MCF 10A (cell line): ENCODE measurements at regions of chr12 and their contacts with region 1.

Region 1: DNA sequence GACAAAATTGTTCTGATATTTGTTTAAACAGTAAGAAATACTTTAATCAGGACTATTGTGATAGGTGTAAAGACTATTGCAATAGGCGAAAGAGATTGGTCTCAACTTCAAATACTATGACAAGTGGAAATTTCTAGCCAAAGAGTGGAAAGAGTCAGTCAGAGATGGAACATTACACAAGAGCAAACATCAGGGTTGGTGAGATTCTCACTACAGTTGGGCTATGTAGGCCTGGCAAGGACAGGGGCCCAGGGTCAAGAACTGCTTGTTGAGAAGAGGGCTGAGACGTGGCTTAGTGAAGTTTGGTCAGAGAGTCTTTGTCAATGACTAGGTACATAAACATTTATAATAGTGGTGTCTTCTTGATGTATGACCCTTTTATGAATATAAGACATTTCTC is 19.4 kb downstream of the CAND1 start:
- DNase-seq: no peak
- H3K4me3 Mint-ChIP-seq: no peak overlapping the region
- H3K27ac Mint-ChIP-seq: no peak overlapping the region
- H3K4me1 Mint-ChIP-seq: no peaks in the 10 kb centered on the region
- H3K27me3 Mint-ChIP-seq: no peaks in the 10 kb centered on the region
- CTCF ChIP-seq: no peak

Region 2: DNA sequence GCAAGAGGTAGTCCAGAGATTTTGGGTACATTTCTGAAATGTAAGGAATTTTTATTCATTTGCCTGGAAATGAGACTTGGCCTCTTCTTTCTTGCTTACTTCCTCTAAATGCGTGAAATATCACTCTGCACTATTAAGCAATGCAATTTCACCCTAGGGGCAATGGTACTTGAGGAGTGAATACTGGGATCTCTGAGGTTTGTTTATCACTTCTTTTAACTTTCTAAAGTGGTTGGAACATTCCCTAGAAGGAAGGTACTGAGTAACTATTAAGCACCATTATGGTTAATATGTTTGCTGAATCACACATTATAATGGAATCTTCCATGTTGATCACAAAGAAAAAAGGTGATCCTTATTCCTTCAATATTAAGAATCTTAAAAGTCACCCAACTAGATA is 140.3 kb before region 1 on chr12:
- CTCF ChIA-PET with region 1: no interaction called
- POLR2A ChIA-PET with region 1: no interaction called
- intact Hi-C with region 1: no loop called
- DNase-seq: peak; percentile 12
- H3K4me3 Mint-ChIP-seq: no peak overlapping the region
- H3K27ac Mint-ChIP-seq: no peak overlapping the region
- H3K4me1 Mint-ChIP-seq: no peaks in the 10 kb centered on the region
- H3K27me3 Mint-ChIP-seq: no peaks in the 10 kb centered on the region
- CTCF ChIP-seq: no peak

Region 3: DNA sequence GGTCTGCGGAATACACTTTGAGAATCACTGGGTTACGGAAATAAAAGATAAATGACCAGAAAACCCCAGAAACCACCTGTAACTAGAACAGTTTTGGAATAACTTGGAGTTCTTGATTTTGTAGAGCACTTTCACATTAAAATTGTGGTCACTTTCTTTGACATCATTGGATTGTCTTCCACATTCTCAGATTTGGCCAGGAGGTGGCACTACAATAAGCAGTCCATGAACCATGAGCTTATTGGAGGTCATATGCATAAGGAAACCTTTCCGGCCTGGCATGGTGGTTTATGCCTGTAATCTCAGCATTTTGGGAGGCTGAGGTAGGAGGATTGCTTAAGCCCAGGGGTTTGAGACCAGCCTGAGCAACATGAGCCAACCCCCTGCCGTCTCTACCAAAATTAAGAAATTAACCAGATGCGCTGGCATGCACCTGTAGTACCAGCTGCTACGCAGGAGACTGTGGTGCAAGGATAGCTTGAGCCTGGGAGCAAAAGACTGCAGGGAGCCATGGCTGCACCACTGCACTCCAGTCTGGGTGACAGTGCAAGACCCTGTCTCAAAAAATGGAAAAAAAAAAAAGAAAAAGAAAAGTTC is 127.1 kb before region 1 on chr12:
- CTCF ChIA-PET with region 1: no interaction called
- POLR2A ChIA-PET with region 1: no interaction called
- intact Hi-C with region 1: no loop called
- DNase-seq: peak; percentile 61
- H3K4me3 Mint-ChIP-seq: no peak overlapping the region
- H3K27ac Mint-ChIP-seq: no peak overlapping the region
- H3K4me1 Mint-ChIP-seq: no peaks in the 10 kb centered on the region
- H3K27me3 Mint-ChIP-seq: peaks cover 59% of the 10 kb centered on the region
- CTCF ChIP-seq: peak; percentile 41

Region 4: GRCh38 chr12:67275380-67275925 is 13.1 kb before region 1 on chr12:
- CTCF ChIA-PET with region 1: interaction called, 3 read pairs
- POLR2A ChIA-PET with region 1: interaction called, 17 read pairs
- intact Hi-C with region 1: no loop called
- DNase-seq: no peak
- H3K4me3 Mint-ChIP-seq: no peak overlapping the region
- H3K27ac Mint-ChIP-seq: peak overlapping the region; percentile 41
- H3K4me1 Mint-ChIP-seq: peaks cover 62% of the 10 kb centered on the region
- H3K27me3 Mint-ChIP-seq: no peaks in the 10 kb centered on the region
- CTCF ChIP-seq: no peak